Activated CD4-positive, alpha-beta memory T cell treated with anti-CD3 and anti-CD28 coated beads for 36 hours (primary cell): ENCODE measurements at regions of chr9 and their contacts with region 1.

Region 1: GRCh38 chr9:131502781-131503625 is at the start of gene POMT1:
- DNase-seq: peak; percentile 92
- H3K4me3 Mint-ChIP-seq: peak within 1 kb of the TSS; percentile 97
- H3K27ac Mint-ChIP-seq: peak within 1 kb of the TSS; percentile 85
- H3K4me1 Mint-ChIP-seq: peaks cover 50% of the 10 kb centered on the region
- H3K27me3 Mint-ChIP-seq: no peaks in the 10 kb centered on the region
- total RNA-seq, gene POMT1: 42.8 to 43.2 TPM

Region 2: DNA sequence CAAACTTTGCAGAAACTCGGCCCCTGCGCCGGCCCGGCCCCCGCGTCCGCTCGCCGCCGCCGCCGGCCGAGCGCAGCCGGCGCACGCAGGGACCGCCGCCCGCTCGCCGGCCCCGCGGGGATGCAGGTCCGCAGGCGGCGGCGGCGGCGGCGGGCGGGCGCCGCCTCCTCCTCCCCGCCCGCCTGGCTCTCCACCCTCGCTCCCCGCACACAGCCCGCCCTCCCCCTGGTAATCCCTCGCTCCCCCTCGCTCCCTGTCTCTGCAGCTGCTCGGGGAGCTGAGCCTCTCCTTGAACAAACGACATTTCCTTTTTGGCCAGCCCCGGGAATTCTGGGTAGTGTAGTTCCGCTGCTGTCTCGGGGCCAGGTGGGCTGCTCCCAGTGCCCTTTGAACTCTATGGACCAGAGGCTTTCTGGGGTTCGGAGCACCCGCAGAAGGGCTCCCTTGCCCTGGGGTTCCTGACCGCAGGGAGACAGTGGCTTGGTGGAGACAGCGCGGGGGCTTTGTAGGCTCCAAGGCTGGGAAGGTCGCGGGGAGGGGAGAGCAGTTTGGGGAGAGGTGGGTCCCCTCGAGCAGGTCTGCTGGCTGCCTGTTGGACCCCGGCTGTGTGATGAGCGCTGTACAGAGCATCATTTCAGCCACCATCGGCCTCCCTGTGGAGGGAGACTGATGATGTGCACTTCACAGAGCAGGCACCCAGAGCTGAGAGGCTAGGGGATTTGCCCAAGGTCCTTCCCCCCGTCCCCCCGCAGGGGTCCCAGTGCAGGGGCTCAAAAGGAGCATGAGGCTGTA is 224.9 kb before region 1 on chr9:
- CTCF ChIA-PET with region 1: no interaction called
- POLR2A ChIA-PET with region 1: interaction called, 6 read pairs
- intact Hi-C with region 1: loop called (anchors 5 kb)
- DNase-seq: peak; percentile 86
- H3K4me3 Mint-ChIP-seq: peak overlapping the region; percentile 69
- H3K27ac Mint-ChIP-seq: peak overlapping the region; percentile 70
- H3K4me1 Mint-ChIP-seq: peaks cover 19% of the 10 kb centered on the region
- H3K27me3 Mint-ChIP-seq: peaks cover 6% of the 10 kb centered on the region

Region 3: DNA sequence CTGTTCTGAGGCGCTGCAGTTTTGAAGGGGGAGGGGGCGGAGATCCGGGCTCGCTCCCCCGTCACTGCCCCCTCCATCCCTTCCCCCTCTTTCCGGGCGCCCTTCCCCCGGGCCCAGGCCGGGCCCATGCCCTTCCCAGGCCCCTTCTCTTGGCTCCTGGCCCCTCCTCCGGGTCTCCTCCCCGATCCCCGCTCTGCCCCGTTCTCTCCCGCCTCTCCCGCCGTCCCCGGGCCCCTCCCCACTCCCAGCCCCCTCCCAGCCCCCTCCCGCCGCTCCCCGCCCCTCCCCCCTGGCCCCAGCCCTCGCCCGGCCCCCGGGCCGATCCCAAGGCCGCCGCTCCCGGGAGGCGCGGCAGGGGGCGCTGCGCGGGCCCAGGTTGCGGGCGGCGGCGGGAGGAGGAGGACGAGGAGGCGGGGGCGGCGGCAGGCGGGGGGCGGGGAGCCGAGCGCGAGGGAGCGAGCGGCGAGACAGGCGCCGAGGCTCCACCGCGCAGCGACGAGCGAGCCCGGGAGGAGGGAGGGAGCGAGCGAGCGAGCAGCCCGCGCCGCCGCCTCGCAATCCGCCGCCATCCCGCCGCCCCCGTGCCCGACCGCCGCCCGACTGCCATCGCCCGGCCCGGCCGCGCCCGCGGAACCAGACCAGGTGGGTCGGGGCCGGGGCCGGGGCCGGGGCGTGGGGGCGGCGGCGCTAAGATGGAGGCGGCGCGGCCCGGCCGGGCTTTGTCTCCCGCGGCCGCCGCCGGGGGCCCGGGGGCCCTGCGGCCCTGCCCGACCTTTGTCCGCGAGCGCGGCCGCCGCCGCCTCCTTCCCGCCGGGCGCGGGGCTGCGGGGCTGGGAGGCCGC is 109.2 kb before region 1 on chr9 and contains the start of gene PRRC2B:
- CTCF ChIA-PET with region 1: no interaction called
- POLR2A ChIA-PET with region 1: no interaction called
- intact Hi-C with region 1: loop called (anchors 1 kb)
- DNase-seq: peak; percentile 89
- H3K4me3 Mint-ChIP-seq: peak within 1 kb of the TSS; percentile 89
- H3K27ac Mint-ChIP-seq: peak within 1 kb of the TSS; percentile 95
- H3K4me1 Mint-ChIP-seq: peaks cover 43% of the 10 kb centered on the region
- H3K27me3 Mint-ChIP-seq: no peaks in the 10 kb centered on the region
- total RNA-seq, gene PRRC2B: 127 to 135 TPM

Region 4: GRCh38 chr9:131590908-131591844 is 88.2 kb after region 1 on chr9:
- CTCF ChIA-PET with region 1: no interaction called
- POLR2A ChIA-PET with region 1: no interaction called
- intact Hi-C with region 1: loop called (anchors 5 kb)
- DNase-seq: peak; percentile 87
- H3K4me3 Mint-ChIP-seq: no peak overlapping the region
- H3K27ac Mint-ChIP-seq: peak overlapping the region; percentile 72
- H3K4me1 Mint-ChIP-seq: peaks cover 27% of the 10 kb centered on the region
- H3K27me3 Mint-ChIP-seq: no peaks in the 10 kb centered on the region

Region 5: GRCh38 chr9:131733541-131734061 is 230.6 kb after region 1 on chr9:
- CTCF ChIA-PET with region 1: no interaction called
- POLR2A ChIA-PET with region 1: no interaction called
- intact Hi-C with region 1: loop called (anchors 5 kb)
- DNase-seq: peak; percentile 74
- H3K4me3 Mint-ChIP-seq: peak overlapping the region; percentile 62
- H3K27ac Mint-ChIP-seq: peak overlapping the region; percentile 93
- H3K4me1 Mint-ChIP-seq: peaks cover 86% of the 10 kb centered on the region
- H3K27me3 Mint-ChIP-seq: no peaks in the 10 kb centered on the region

Region 6: DNA sequence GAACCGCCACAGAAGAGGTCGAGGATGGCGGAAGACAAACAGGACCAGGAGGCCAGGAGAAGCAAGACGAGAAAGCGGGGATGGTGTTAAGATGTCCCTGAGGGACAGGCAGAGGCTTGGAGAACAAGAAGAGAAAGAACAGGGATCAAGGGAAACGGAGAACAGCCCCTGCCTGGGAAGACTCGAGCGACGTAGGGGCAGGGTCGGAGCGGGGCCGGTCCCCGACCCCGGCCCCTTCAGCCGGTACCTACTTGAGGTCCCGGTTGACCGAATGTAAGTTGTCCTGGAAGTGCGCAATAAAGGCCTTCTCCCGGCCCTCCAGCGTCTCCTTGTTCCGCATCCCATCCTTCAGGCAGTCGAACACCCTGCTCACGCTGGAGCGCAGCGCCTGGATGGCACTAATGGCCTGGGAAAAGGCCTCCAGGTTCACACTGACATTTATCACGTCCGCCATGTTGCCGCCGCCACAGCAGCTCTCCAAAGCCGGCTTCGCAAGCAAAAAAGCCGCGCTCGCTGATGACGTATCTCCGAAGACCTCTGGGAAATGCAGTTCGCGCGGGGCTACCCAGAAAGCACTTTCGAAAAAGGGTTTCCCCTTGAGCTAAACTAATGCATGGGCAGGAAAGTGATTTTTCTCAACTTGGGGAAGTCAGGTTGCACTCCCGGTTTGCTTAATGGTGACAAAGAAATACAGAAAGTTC is 576.5 kb after region 1 on chr9 and contains the start of gene MED27:
- CTCF ChIA-PET with region 1: no interaction called
- POLR2A ChIA-PET with region 1: no interaction called
- intact Hi-C with region 1: loop called (anchors 5 kb)
- DNase-seq: peak; percentile 97
- H3K4me3 Mint-ChIP-seq: peak within 1 kb of the TSS; percentile 91
- H3K27ac Mint-ChIP-seq: peak within 1 kb of the TSS; percentile 79
- H3K4me1 Mint-ChIP-seq: peaks cover 46% of the 10 kb centered on the region
- H3K27me3 Mint-ChIP-seq: no peaks in the 10 kb centered on the region
- total RNA-seq, gene MED27: 30.1 to 32.4 TPM